Sigmoid colon (tissue), 7 donors: ENCODE measurements at regions of chr3 and their contacts with region 1.

Region 1: DNA sequence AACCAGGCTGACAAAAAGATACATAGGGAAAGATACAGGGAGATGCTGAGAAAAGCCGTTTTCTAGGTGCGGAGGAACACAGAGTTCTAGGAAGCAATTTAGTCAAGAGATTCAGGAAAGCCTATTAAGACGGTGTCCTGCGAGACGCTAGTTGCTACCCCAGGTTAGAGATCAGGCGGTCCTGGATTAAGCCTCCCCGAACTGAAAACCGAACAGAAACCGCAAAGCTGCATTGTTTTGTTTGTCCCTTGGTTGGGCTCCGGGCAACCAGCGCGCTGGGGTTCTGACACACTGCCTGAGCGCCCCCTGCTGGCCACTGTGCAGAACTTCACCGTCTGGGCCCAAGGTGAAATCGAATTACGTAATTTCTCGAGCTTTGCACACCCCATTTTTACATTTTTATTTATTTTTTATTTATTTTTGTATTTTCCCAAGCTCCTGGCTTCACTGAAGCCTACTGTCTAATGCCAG is 37.3 kb upstream of the NDUFB4 start:
- DNase-seq: peak; percentile 96
- H3K4me3 ChIP-seq: peak overlapping the region; percentile 39 to 54 (median 49)
- H3K27ac ChIP-seq: peak overlapping the region; percentile 81 to 92 (median 86)
- H3K4me1 ChIP-seq: peaks cover 0 to 59% (median 48%) of the 10 kb centered on the region in 4 donors
- H3K27me3 ChIP-seq: no peaks in the 10 kb centered on the region
- CTCF ChIP-seq: peak; percentile 98 to 100 (median 99)
- EP300 ChIP-seq: no peak
- POLR2A ChIP-seq: no peak

Region 2: GRCh38 chr3:119702530-119703157 is 856.2 kb before region 1 on chr3 and contains the start of gene CFAP91:
- intact Hi-C with region 1: loop called (anchors 10 kb)
- DNase-seq: peak; percentile 99
- H3K4me3 ChIP-seq: peak within 1 kb of the TSS; percentile 49 to 64 (median 58)
- H3K27ac ChIP-seq: peak within 1 kb of the TSS; percentile 47 to 71 (median 56)
- H3K4me1 ChIP-seq: peaks cover 0 to 17% (median 13%) of the 10 kb centered on the region in 4 donors
- H3K27me3 ChIP-seq: no peaks in the 10 kb centered on the region
- CTCF ChIP-seq: no peak
- EP300 ChIP-seq: no peak
- POLR2A ChIP-seq: no peak
- total RNA-seq, gene CFAP91: 1.4 to 11.8 (median 8.8) TPM

Region 3: DNA sequence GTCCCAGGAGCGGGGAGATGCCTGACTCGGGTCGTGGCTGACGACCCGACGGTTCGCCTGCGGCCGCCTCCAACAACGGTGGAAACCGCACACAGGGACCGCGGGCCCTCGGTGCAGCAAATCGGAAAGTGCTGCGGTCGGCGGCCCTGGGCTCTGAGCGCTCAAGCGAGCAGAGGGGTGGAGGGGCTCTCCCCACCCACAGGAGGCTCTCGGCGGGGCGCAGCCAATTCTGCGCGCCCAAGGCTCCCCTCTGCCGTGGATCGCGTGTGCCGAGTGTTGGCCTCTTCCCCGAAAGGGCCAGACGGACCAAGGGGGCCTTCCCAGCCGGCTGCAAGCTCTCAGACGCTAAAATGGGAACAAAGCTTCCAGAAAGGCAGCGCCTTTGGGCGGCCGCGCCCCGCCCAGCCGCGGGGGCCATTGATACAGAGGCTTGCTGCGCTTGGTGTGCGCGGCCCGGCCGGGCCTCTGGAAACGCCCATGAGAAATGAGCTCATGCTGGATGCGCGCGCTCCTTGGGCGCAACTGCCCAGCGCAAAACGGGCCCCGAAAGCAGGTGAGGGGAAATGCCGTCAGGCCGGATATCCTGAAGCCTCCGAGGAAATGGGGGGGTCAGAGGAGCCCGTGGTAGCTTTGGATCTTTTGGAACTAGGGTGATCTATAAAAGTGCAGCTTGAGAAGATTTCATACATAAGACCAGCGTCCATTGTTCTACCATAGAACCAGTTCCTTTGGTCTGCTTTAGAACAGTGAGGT is 463.4 kb before region 1 on chr3:
- intact Hi-C with region 1: loop called (anchors 10 kb)
- DNase-seq: peak; percentile 96
- H3K4me3 ChIP-seq: peak overlapping the region; percentile 67 to 96 (median 84)
- H3K27ac ChIP-seq: peak overlapping the region; percentile 99 to 100 (median 100)
- H3K4me1 ChIP-seq: peaks cover 0 to 38% (median 23%) of the 10 kb centered on the region in 4 donors
- H3K27me3 ChIP-seq: no peaks in the 10 kb centered on the region
- CTCF ChIP-seq: no peak
- EP300 ChIP-seq: peak in 1 of 4 donors; percentile 34
- POLR2A ChIP-seq: peak; percentile 92 to 93

Region 4: DNA sequence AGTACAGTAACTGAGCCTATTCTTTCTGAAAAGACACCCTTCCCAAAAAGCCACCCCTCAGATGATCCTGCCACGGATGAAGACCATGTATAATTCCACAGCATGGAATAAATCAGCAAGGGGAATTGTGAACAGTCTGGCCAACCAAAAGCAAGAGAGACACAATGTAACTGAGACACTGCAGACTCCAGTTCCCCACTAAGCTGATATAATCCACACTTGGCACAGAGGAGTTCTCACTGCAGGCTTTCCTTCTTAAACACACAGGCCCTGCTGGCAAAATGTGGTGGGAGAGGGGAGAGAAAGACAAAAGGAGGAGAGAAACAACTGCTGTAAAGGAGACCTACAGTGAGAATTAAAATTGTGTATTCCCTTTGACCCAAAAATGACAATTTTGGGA is 286.5 kb before region 1 on chr3:
- intact Hi-C with region 1: no loop called
- DNase-seq: no peak
- H3K4me3 ChIP-seq: no peak overlapping the region
- H3K27ac ChIP-seq: peak overlapping the region in 1 of 4 donors; percentile 21
- H3K4me1 ChIP-seq: peaks cover 0 to 11% (median 9%) of the 10 kb centered on the region in 4 donors
- H3K27me3 ChIP-seq: no peaks in the 10 kb centered on the region
- CTCF ChIP-seq: no peak
- EP300 ChIP-seq: no peak
- POLR2A ChIP-seq: no peak

Region 5: DNA sequence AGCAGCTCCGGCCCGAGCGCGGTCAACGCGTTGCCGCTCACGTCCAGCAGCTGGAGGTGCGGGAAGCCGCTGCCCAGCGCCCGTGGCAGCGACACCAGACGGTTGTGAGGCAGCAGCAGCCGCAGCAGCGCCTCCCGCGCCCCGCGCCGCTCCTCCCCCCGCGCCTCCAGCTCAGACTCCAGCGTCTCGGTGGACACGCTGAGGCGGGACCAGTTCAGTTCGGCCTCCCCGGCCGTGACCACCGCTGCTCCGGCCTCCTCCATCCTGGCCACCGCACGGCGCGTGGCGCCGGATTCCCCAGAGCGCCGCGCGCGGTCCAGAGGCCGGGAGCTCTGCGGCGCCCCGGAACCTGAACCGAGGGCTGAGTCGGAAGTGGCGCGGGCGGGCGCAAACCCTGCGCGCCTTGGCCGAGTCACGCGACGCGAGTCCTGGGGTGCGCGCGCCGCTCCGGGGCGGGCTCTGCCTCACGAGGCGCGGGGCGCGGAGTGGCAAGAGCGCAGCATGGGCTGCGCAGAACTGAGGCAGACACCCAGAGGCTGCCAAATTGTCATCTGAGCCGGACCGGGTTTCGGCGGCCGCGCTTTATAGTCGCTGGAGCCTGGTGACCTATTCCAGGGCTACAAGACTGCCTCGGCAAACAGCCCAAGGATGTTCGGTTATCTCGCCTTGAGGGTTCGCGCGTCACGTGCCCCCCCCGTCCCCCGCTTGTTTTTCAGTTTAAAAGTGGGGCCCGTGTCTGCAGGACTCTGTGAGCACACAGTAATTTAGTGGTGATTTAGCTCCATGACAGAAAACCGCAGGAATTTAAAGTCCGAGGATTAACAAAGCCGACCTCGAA is 209.6 kb before region 1 on chr3 and contains the start of gene LRRC58:
- intact Hi-C with region 1: loop called (anchors 1 kb)
- DNase-seq: peak; percentile 95
- H3K4me3 ChIP-seq: peak within 1 kb of the TSS; percentile 62 to 92 (median 84)
- H3K27ac ChIP-seq: peak within 1 kb of the TSS; percentile 84 to 96 (median 94)
- H3K4me1 ChIP-seq: peaks cover 0 to 40% (median 30%) of the 10 kb centered on the region in 4 donors
- H3K27me3 ChIP-seq: no peaks in the 10 kb centered on the region
- CTCF ChIP-seq: peak in 2 of 4 experiments; percentile 23 to 29
- EP300 ChIP-seq: peak in 1 of 4 donors; percentile 44
- POLR2A ChIP-seq: peak; percentile 82 to 83
- total RNA-seq, gene LRRC58: 34.5 to 48.5 (median 43.4) TPM

Region 6: GRCh38 chr3:120450600-120451271 is 108.1 kb before region 1 on chr3 and contains the start of gene FSTL1:
- intact Hi-C with region 1: loop called (anchors 10 kb)
- DNase-seq: peak; percentile 91
- H3K4me3 ChIP-seq: peak within 1 kb of the TSS; percentile 85 to 94 (median 89)
- H3K27ac ChIP-seq: peak within 1 kb of the TSS; percentile 96 to 98 (median 98)
- H3K4me1 ChIP-seq: peaks cover 0 to 51% (median 46%) of the 10 kb centered on the region in 4 donors
- H3K27me3 ChIP-seq: no peaks in the 10 kb centered on the region
- CTCF ChIP-seq: no peak
- EP300 ChIP-seq: no peak
- POLR2A ChIP-seq: peak; percentile 31 to 84
- total RNA-seq, gene FSTL1: 266 to 653 (median 320) TPM

Region 7: GRCh38 chr3:120596116-120596852 is 37.5 kb after region 1 on chr3 and contains the start of gene NDUFB4:
- intact Hi-C with region 1: loop called (anchors 5 kb)
- DNase-seq: peak; percentile 99
- H3K4me3 ChIP-seq: peak within 1 kb of the TSS; percentile 62 to 88 (median 76)
- H3K27ac ChIP-seq: peak within 1 kb of the TSS; percentile 89 to 94 (median 90)
- H3K4me1 ChIP-seq: peaks cover 0 to 46% (median 38%) of the 10 kb centered on the region in 4 donors
- H3K27me3 ChIP-seq: no peaks in the 10 kb centered on the region
- CTCF ChIP-seq: no peak
- EP300 ChIP-seq: peak in 1 of 4 donors; percentile 50
- POLR2A ChIP-seq: peak; percentile 78 to 86
- total RNA-seq, gene NDUFB4: 72.3 to 148 (median 113) TPM

Region 8: DNA sequence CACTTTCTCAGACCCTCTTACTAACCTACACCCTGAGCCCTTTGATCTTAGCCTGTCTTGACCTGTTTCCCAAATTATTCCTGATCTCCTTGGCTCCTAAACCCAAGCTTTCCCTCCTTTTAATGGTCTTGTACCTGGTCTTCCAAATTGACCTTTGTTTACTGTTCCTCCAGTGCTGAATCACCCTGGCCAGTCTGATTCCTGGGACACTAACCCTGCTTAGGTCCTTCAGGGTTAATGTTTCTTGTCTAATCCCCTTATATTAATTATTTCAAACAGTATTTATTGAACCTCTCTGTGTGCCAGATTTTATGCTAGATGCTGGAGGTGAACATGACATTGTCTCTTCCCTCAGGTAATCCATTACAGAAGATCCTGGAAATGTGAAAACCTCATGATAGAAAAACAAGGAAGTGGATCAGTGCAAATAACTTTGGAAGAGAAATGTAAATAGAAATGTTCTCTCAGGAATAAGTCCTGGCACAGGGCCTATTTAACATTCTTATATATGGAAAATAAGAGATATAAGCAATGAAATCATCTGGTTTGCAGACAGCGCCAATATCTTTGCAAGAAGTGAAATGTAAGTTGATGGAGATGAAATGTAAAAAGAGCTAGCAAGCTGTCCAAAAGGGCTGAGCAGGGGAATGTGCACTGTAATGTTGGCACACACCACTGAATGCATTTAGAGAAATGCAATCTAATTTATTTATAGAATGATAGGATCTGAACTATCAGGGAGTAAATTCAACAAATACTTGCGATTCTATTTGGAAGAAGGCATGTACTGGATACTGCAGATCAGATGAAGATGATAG is 102.5 kb after region 1 on chr3:
- intact Hi-C with region 1: no loop called
- DNase-seq: no peak
- H3K4me3 ChIP-seq: no peak overlapping the region
- H3K27ac ChIP-seq: no peak overlapping the region
- H3K4me1 ChIP-seq: peaks cover 0 to 10% (median 0%) of the 10 kb centered on the region in 4 donors
- H3K27me3 ChIP-seq: no peaks in the 10 kb centered on the region
- CTCF ChIP-seq: no peak
- EP300 ChIP-seq: no peak
- POLR2A ChIP-seq: no peak

Region 9: GRCh38 chr3:120908030-120908794 is 349.4 kb after region 1 on chr3 and contains the start of gene STXBP5L:
- intact Hi-C with region 1: loop called (anchors 5 kb)
- DNase-seq: peak; percentile 90
- H3K4me3 ChIP-seq: peak within 1 kb of the TSS; percentile 55 to 64 (median 57)
- H3K27ac ChIP-seq: peak within 1 kb of the TSS; percentile 29 to 81 (median 76)
- H3K4me1 ChIP-seq: peaks cover 0 to 14% (median 11%) of the 10 kb centered on the region in 4 donors
- H3K27me3 ChIP-seq: no peaks in the 10 kb centered on the region
- CTCF ChIP-seq: no peak
- EP300 ChIP-seq: no peak
- POLR2A ChIP-seq: peak in 1 of 2 donors; percentile 37
- total RNA-seq, gene STXBP5L: 11.4 to 14.3 (median 12.8) TPM